ENCODE measurements at regions of chr4 and their contacts with region 1.

Region 1: DNA sequence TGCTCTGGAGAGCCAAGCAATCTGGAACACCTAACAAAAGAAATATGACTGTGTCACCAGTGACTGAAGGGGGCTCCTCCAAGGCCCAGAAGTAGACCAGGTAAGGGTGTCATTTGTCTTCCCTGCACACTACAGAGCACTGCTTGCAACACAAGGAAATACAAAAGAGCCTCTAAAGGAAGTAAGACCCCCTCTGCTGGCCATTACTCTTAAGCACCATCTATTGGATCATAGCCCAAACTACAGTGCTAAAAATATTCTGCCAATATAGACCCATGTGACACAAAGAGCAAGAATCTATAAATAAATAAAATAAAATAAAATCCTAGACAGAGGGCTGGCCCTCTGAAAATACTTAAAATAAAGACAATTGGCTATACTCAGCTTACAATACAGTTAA is 528.7 kb downstream of the TMA16 start:
- DNase-seq: no peak
- ATAC-seq: peak; percentile 71
- H3K4me3 ChIP-seq: no peak overlapping the region
- H3K27ac ChIP-seq: no peak overlapping the region
- H3K4me1 ChIP-seq: no peaks in the 10 kb centered on the region
- H3K27me3 ChIP-seq: no peaks in the 10 kb centered on the region
- CTCF ChIP-seq: peak in 1 of 3 experiments; percentile 22; a peak in 2 of 6 replicates
- EP300 ChIP-seq: no peak
- POLR2A ChIP-seq: no peak
- RAD21 ChIP-seq: 0 out of 2 replicates have a peak, but pooled peaks have one; percentile 8

Region 2: DNA sequence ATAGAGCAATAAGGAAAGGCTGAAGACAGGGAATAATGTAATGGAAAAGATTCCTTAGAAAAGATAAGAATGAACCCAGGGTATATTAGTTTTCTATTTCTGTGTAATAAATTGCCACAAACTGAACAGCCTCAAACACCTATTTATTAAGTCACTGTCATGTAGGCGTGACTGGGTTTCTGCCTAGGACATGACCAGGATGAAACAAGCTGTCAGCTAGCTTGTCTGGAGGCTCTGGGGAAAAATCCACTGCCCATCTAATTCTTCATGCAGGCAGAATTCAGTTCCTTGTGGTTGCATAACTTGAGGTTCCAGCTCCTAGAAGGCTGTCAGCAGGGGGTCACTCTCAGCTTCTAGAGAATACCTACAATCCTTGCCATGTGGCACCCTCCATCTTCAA is 251.0 kb before region 1 on chr4:
- CTCF ChIA-PET with region 1: no interaction called
- POLR2A ChIA-PET with region 1: no interaction called
- RAD21 ChIA-PET with region 1: no interaction called
- SMC1A ChIA-PET with region 1: no interaction called
- in situ Hi-C with region 1: no loop called
- intact Hi-C with region 1: loop called (anchors 5 kb)
- DNase-seq: no peak
- ATAC-seq: no peak
- H3K4me3 ChIP-seq: no peak overlapping the region
- H3K27ac ChIP-seq: no peak overlapping the region
- H3K4me1 ChIP-seq: no peaks in the 10 kb centered on the region
- H3K27me3 ChIP-seq: no peaks in the 10 kb centered on the region
- CTCF ChIP-seq: no peak
- EP300 ChIP-seq: no peak
- POLR2A ChIP-seq: no peak
- RAD21 ChIP-seq: no peak